ENCODE measurements at regions of chr4 and their contacts with region 1.

Region 1: DNA sequence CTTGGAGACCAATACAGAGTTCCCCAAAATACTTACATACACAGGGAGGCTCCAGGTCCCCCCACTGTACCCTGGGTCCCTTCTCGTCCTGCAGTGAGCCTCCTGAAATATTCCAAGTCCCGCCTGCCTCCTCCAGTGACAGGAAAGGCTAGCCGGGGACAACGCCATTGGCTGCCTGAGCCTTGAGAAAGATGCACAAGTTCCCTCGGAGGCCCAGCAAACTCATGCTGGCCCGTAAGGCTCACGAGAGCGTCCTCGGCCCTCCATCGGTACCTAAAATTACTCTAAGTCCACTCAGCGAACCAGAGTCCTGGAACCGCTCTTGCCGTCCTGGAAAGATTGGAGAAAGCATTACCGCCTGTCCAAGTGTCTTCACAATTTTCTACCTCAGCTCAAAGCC is 228.6 kb downstream of the ADAM29 start:
- DNase-seq: no peak
- ATAC-seq: no peak
- H3K4me3 ChIP-seq: no peak overlapping the region
- H3K27ac ChIP-seq: no peak overlapping the region
- H3K4me1 ChIP-seq: no peaks in the 10 kb centered on the region
- H3K27me3 ChIP-seq: no peaks in the 10 kb centered on the region
- CTCF ChIP-seq: no peak
- POLR2A ChIP-seq: no peak
- RAD21 ChIP-seq: no peak

Region 2: DNA sequence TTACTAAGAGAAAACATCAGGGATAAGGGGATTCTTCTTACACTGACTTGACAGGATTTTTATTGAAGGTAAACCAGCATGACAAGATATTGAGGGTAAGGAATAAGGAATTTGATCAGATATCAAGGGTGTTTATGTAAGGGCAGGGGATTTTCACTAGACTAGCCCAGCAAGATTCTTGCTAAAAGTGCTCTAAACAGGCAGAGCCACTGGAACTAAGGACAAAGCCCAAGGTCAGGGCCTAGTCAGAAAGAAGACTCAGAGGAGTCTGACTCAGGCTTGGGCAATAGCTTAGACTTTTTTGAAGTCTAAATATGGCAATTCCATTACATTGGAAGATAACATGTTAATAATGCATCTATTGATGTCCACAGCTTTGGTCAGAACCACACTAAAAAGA is 311.3 kb before region 1 on chr4:
- CTCF ChIA-PET with region 1: interaction called, 3 read pairs
- POLR2A ChIA-PET with region 1: no interaction called
- dilution Hi-C with region 1: no loop called
- in situ Hi-C with region 1: no loop called
- intact Hi-C with region 1: loop called (anchors 10 kb)
- DNase-seq: no peak
- ATAC-seq: no peak
- H3K4me3 ChIP-seq: no peak overlapping the region
- H3K27ac ChIP-seq: no peak overlapping the region
- H3K4me1 ChIP-seq: no peaks in the 10 kb centered on the region
- H3K27me3 ChIP-seq: no peaks in the 10 kb centered on the region
- CTCF ChIP-seq: no peak
- POLR2A ChIP-seq: no peak
- RAD21 ChIP-seq: no peak